ENCODE measurements at regions of chr6 and their contacts with region 1.

Region 1: GRCh38 chr6:72084992-72085569 is 198.7 kb downstream of the RIMS1 start:
- DNase-seq: no peak
- ATAC-seq: no peak
- H3K4me3 Mint-ChIP-seq: no peak overlapping the region
- H3K27ac Mint-ChIP-seq: no peak overlapping the region
- H3K4me1 Mint-ChIP-seq: no peaks in the 10 kb centered on the region
- H3K27me3 Mint-ChIP-seq: no peaks in the 10 kb centered on the region
- CTCF ChIP-seq: peak; percentile 53

Region 2: GRCh38 chr6:71383901-71384489 is 701.1 kb before region 1 on chr6:
- CTCF ChIA-PET with region 1: interaction called, 5 read pairs
- POLR2A ChIA-PET with region 1: no interaction called
- intact Hi-C with region 1: loop called (anchors 5 kb)
- DNase-seq: peak; percentile 12
- ATAC-seq: no peak
- H3K4me3 Mint-ChIP-seq: no peak overlapping the region
- H3K27ac Mint-ChIP-seq: no peak overlapping the region
- H3K4me1 Mint-ChIP-seq: no peaks in the 10 kb centered on the region
- H3K27me3 Mint-ChIP-seq: no peaks in the 10 kb centered on the region
- CTCF ChIP-seq: peak; percentile 57

Region 3: DNA sequence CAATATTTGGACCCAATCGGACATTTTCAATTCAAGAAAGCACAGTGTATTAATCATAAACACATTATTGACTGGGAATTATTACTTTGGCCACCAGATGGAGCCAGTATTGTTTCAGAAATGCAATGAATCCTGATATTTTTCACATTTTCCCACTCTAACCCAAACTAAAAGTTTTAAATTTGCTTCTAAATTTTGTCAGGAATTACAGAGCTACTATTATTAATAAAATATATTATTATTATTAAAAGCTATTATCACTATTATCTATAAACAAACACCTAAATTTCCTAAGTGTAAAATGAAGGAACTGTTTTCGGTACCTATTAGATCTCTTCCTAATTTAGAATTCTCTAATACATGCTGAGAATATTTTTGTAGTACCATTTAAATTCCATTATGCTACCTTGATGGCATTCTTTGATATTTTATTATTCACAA is 551.1 kb before region 1 on chr6:
- CTCF ChIA-PET with region 1: interaction called, 5 read pairs
- POLR2A ChIA-PET with region 1: no interaction called
- intact Hi-C with region 1: loop called (anchors 10 kb)
- DNase-seq: no peak
- ATAC-seq: no peak
- H3K4me3 Mint-ChIP-seq: no peak overlapping the region
- H3K27ac Mint-ChIP-seq: no peak overlapping the region
- H3K4me1 Mint-ChIP-seq: no peaks in the 10 kb centered on the region
- H3K27me3 Mint-ChIP-seq: no peaks in the 10 kb centered on the region
- CTCF ChIP-seq: peak; percentile 80

Region 4: DNA sequence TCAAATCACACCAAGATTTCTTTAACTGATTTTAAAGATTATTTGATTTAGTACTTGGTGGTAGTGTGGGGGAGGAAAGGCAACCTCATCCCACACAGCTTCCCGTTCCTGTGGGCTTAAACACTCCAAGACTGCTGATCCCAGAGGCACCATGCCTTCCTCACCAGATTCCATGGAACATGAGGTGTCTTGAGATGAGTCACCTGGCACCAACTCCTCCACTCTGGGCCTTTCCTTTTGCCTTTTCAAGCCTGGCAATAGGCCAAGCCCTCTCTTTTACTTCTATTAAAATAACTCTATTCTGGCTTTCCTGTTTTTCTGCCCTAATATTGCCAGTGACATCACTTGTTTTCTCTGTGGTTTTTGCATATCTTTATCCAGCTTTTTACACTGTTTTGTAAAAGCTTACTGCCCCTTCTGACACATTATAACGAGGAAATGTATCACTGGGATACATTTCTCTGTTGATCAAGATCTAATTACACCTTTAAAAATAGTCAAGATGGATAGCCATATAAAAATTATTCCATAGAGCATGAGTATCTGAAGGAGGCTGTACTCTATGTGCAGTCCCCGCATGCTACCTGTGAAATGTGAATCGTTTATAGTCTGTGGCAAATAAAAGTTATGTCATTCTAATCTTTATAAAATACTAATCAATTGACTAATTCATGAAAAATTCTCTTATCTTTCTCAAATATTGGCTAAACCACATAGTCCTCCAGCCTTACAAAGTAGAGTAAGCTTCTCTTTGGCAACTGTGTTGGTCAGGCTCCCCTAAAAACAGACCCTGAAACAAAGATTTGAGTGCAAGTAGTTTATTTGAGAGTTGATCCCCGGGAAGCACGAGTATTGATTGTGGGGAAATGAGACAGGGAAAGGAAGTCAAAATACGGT is 279.0 kb after region 1 on chr6:
- CTCF ChIA-PET with region 1: no interaction called
- POLR2A ChIA-PET with region 1: no interaction called
- intact Hi-C with region 1: no loop called
- DNase-seq: no peak
- ATAC-seq: no peak
- H3K4me3 Mint-ChIP-seq: no peak overlapping the region
- H3K27ac Mint-ChIP-seq: no peak overlapping the region
- H3K4me1 Mint-ChIP-seq: no peaks in the 10 kb centered on the region
- H3K27me3 Mint-ChIP-seq: peaks cover 8% of the 10 kb centered on the region
- CTCF ChIP-seq: no peak